Activated CD4-positive, alpha-beta T cell treated with anti-CD3 and anti-CD28 coated beads for 36 hours (primary cell): ENCODE measurements at regions of chr1 and their contacts with region 1.

Region 1: DNA sequence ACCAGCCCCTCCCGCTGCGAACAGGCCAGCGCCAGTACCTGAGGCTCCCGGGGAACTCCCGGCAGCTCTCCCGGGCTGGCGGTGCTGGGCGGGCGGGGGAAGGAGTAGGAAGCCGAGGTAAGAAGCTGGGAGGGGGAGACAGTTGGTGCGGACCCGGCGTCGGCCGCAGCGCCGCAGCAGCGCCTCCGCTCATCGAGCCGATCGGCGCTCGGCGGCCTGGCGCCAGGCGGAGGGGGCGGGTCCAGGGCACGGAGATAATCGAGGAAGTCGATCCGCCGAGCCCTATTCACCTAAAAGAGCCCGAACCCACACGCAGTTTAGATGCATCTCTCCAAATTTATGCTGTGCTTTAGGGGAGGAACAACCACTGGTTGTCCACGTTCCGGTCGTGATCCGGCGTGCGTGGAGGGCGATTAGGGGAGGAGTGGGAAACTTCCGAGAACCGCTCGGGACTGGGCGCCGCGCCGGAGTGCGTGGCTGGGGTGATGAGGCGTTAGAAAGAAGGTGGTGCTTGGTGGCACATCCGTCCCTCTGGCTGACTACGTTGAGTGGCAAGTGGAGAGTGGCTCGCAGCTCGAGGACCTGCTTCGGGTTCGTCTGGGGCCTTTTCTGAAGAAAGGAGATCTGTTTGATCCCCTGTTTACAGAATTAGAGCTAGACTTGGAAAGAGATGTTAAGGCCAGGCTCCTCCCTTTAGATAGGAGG is at the start of gene VAMP4:
- DNase-seq: peak; percentile 94
- ATAC-seq: peak; percentile 88
- H3K4me3 Mint-ChIP-seq: peak within 1 kb of the TSS; percentile 92
- H3K27ac Mint-ChIP-seq: peak within 1 kb of the TSS; percentile 99
- H3K4me1 Mint-ChIP-seq: peaks cover 41% of the 10 kb centered on the region
- H3K27me3 Mint-ChIP-seq: no peaks in the 10 kb centered on the region
- total RNA-seq, gene VAMP4: 9.7 to 11.6 TPM

Region 2: GRCh38 chr1:170531758-170532657 is 1210.0 kb before region 1 on chr1 and contains the start of gene GORAB:
- CTCF ChIA-PET with region 1: no interaction called
- POLR2A ChIA-PET with region 1: no interaction called
- intact Hi-C with region 1: loop called in 1 of 2 experiments (anchors 5 kb)
- DNase-seq: peak; percentile 94
- ATAC-seq: peak; percentile 98
- H3K4me3 Mint-ChIP-seq: no peak within 1 kb of the TSS
- H3K27ac Mint-ChIP-seq: no peak within 1 kb of the TSS
- H3K4me1 Mint-ChIP-seq: peaks cover 15% of the 10 kb centered on the region
- H3K27me3 Mint-ChIP-seq: no peaks in the 10 kb centered on the region
- total RNA-seq, gene GORAB: 9.8 to 13.5 TPM

Region 3: DNA sequence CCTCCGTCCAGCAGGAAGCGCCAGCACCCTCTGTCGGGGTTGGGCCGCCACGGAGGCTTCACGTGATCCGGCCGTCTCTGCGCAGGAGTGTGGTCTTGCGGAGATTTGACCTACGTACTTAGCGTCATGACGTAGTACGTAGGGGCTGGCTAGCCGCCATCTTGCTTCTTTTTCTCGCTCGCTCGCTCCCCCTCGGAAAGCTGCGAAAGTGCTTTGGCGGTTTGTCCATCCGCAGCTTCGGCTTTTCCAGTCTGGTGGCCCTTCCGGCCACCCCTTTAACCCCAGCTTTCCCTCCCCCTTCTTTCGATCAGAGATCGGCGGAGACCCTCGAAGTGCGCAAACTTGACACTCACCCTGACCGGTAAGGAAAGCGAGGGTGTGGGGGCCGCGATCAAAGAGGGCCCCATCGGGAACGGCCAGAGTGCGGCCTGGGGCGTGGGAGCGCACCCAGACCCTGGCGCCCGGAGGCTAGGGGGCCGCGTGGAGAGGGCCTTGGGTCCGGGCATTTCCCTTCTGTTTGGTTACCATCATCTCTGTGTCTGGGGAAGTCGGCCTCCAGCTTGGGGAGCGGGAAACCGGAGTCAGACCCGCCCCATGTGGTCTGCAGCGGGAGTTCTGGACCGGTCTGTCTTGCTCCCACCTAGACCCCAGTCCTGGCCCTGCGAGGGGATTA is 256.5 kb before region 1 on chr1 and contains the start of gene PRRC2C:
- CTCF ChIA-PET with region 1: no interaction called
- POLR2A ChIA-PET with region 1: no interaction called
- intact Hi-C with region 1: loop called (anchors 1 to 2 kb)
- DNase-seq: peak; percentile 97
- ATAC-seq: peak; percentile 90
- H3K4me3 Mint-ChIP-seq: peak within 1 kb of the TSS; percentile 82
- H3K27ac Mint-ChIP-seq: peak within 1 kb of the TSS; percentile 95
- H3K4me1 Mint-ChIP-seq: peaks cover 43% of the 10 kb centered on the region
- H3K27me3 Mint-ChIP-seq: no peaks in the 10 kb centered on the region
- total RNA-seq, gene PRRC2C: 233 to 351 TPM

Region 4: DNA sequence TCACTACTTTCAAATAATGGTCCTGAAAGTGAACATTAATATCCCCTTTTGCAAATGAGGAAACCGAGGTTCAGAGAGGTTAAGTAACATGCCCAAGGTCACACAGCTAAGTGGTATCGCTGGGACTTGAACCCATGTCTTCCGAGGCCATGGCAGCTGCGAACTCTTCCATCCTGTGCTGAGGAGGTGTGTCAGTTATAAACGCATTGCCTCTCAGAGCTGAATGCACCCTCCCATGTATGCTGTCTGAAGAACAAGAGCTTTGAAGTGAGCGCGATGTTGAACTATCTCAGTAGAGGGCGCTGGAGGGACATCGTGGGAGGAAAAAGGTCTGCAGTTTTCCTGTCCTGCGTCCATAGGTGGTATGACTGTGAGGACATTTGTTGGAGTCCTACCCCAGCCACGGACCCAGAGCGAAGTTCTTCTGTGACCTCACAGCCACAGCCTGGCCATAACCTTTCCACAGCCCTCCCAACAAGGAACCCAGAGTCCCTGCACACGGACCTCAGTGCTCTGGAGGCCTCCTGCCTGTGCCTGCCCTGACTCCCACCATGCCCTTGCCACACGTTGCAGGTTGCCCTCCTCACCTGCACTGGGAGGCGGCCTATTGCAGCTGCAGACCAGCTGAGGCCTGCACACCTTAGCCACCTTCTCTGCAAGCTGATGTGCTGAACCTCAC is 97.1 kb before region 1 on chr1:
- CTCF ChIA-PET with region 1: interaction called, 11 read pairs
- POLR2A ChIA-PET with region 1: no interaction called
- intact Hi-C with region 1: no loop called
- DNase-seq: peak; percentile 84
- ATAC-seq: peak; percentile 98
- H3K4me3 Mint-ChIP-seq: no peak overlapping the region
- H3K27ac Mint-ChIP-seq: no peak overlapping the region
- H3K4me1 Mint-ChIP-seq: peaks cover 6% of the 10 kb centered on the region
- H3K27me3 Mint-ChIP-seq: no peaks in the 10 kb centered on the region

Region 5: GRCh38 chr1:171781176-171781875 is 39.3 kb after region 1 on chr1 and contains the start of gene METTL13:
- CTCF ChIA-PET with region 1: interaction called, 6 read pairs
- POLR2A ChIA-PET with region 1: interaction called, 8 read pairs
- intact Hi-C with region 1: loop called (anchors 1 kb)
- DNase-seq: peak; percentile 99
- ATAC-seq: peak; percentile 97
- H3K4me3 Mint-ChIP-seq: peak within 1 kb of the TSS; percentile 92
- H3K27ac Mint-ChIP-seq: peak within 1 kb of the TSS; percentile 97
- H3K4me1 Mint-ChIP-seq: peaks cover 57% of the 10 kb centered on the region
- H3K27me3 Mint-ChIP-seq: no peaks in the 10 kb centered on the region
- total RNA-seq, gene METTL13: 41.1 to 52.9 TPM

Region 6: DNA sequence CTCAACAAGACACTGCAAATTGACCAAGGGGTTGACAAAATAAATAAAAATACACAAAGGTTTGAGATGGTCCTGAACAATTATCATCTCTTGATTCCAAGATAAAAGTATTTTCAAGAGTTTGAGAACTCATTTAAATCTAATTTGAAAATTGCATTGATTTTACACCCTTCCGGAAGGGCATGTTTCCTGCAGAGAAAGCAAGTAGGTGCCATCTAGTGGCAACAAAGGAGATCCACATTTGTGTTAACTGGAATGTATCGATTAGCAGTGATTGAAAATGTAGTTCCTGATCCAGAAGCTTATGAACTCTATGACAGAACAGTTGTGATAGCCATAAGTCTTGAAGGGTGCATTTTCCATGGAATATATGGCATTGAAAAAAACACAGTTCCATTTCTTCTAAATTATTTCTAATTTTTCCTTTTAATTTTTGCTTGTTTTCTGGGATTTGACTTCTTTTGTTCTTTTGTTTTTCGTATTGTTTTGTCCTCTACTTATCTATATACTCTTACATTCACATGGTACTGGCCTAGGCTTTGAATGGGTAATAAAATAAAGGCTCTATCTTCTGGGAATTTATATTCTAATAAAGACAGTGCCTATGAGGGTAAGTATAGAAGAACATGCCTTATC is 242.9 kb after region 1 on chr1:
- CTCF ChIA-PET with region 1: interaction called, 3 read pairs
- POLR2A ChIA-PET with region 1: no interaction called
- intact Hi-C with region 1: loop called in 1 of 2 experiments (anchors 10 kb)
- DNase-seq: peak; percentile 8
- ATAC-seq: peak; percentile 58
- H3K4me3 Mint-ChIP-seq: no peak overlapping the region
- H3K27ac Mint-ChIP-seq: no peak overlapping the region
- H3K4me1 Mint-ChIP-seq: no peaks in the 10 kb centered on the region
- H3K27me3 Mint-ChIP-seq: no peaks in the 10 kb centered on the region

Region 7: DNA sequence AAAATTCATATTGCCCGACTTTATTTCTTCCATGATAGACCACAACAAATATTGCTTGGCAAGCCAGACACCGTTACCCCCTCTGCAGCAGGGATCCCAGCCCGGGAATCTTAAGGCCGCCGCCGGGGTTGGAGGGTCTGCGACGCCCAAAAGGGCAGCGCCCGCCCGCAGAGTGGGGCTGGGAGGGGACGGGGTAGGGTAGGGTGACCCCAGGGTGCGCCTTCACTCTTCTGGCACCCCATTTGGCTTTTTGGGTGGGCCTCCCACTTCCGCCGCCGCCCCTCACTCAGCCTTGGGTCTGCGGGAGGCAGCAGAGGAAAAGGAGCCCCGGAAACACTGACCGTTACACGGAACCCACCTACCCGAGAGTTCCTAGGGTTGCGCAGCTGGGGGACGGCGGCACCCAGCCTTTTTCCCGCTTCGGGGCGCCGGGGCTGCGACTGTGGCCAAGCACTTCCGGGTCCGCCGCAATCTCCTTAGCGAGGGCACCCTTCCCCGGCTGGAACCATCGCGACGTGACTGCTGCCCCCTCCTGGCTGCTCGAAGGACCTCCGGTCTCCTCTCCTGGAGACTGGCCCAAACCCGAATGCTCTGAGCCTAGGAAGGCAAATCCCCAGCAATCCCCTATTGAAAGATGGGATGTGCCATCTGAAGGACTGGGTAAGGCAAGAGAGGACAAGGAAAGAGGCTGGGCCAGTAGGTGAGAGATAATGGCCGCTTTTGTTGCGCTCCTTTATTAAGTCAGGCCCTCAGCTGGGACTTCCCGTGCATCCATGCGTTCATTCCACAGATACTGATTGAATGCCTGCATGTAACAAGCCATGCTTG is 701.8 kb after region 1 on chr1 and contains the start of gene PIGC:
- CTCF ChIA-PET with region 1: no interaction called
- POLR2A ChIA-PET with region 1: no interaction called
- intact Hi-C with region 1: loop called in 1 of 2 experiments (anchors 5 kb)
- DNase-seq: peak; percentile 97
- ATAC-seq: peak; percentile 99
- H3K4me3 Mint-ChIP-seq: peak within 1 kb of the TSS; percentile 85
- H3K27ac Mint-ChIP-seq: peak within 1 kb of the TSS; percentile 91
- H3K4me1 Mint-ChIP-seq: peaks cover 31% of the 10 kb centered on the region
- H3K27me3 Mint-ChIP-seq: no peaks in the 10 kb centered on the region
- total RNA-seq, gene PIGC: 14.7 to 17.1 TPM